ENCODE measurements at regions of chr14 and their contacts with region 1.

Region 1: GRCh38 chr14:24146978-24147760 is at the start of gene RNF31:
- DNase-seq: peak; percentile 97
- H3K4me3 Mint-ChIP-seq: peak within 1 kb of the TSS; percentile 94
- H3K27ac Mint-ChIP-seq: peak within 1 kb of the TSS; percentile 98
- H3K4me1 Mint-ChIP-seq: peaks cover 62% of the 10 kb centered on the region
- H3K27me3 Mint-ChIP-seq: no peaks in the 10 kb centered on the region
- total RNA-seq, gene RNF31: 115 and 129 TPM in 2 replicates

Region 2: GRCh38 chr14:24051789-24052655 is 95.1 kb before region 1 on chr14 and contains the start of gene CARMIL3:
- intact Hi-C with region 1: loop called (anchors 2 kb)
- DNase-seq: peak; percentile 67
- H3K4me3 Mint-ChIP-seq: peak within 1 kb of the TSS; percentile 85
- H3K27ac Mint-ChIP-seq: peak within 1 kb of the TSS; percentile 76
- H3K4me1 Mint-ChIP-seq: peaks cover 22% of the 10 kb centered on the region
- H3K27me3 Mint-ChIP-seq: peaks cover 17% of the 10 kb centered on the region
- total RNA-seq, gene CARMIL3: 3.0 and 3.4 TPM in 2 replicates

Region 3: DNA sequence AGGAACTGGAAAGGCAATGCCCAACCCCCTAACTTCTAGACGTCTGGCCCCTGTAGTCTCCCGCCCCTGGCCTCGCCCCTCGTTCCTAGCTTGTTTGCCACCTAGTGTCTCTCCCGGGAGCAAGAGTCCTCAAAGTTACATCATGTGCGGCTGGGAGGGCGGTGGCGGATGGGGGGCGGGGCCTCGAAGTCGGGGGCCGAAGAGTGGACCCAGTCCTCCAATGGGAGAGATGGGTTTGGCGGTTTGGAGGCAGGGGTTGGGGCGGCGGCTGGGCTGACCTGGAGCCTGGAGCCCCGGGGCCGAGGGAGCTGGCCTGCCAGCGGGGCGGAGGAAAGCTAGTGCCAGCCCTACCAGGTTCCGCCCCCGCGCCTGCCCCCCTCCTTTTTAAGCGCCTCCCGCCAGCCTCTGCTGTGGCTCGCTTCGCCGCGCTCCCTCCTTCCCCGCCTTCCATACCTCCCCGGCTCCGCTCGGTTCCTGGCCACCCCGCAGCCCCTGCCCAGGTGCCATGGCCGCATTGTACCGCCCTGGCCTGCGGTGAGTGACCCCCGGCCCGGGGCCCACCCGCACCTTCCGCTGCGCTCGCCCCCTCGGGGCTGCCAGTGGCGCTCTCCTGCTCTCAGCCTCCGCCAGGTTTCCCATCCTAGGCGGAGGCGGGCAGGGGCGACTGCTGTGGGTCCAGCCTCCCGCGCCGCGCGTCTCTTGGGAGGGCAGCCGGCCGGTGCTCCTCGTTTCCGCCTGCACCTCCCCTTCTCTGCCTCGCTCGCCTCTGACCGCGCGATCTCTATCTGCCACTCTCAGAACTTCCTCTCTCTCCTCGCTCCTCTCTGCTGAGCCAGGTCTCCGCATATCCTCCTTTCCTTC is 53.0 kb before region 1 on chr14 and contains the start of gene PCK2:
- intact Hi-C with region 1: loop called (anchors 1 kb)
- DNase-seq: peak; percentile 70
- H3K4me3 Mint-ChIP-seq: peak within 1 kb of the TSS; percentile 100
- H3K27ac Mint-ChIP-seq: peak within 1 kb of the TSS; percentile 97
- H3K4me1 Mint-ChIP-seq: peaks cover 36% of the 10 kb centered on the region
- H3K27me3 Mint-ChIP-seq: no peaks in the 10 kb centered on the region
- total RNA-seq, gene PCK2: 55.0 and 62.8 TPM in 2 replicates

Region 4: GRCh38 chr14:24108336-24108874 is 38.8 kb before region 1 on chr14:
- intact Hi-C with region 1: no loop called
- DNase-seq: no peak
- H3K4me3 Mint-ChIP-seq: peak overlapping the region; percentile 24
- H3K27ac Mint-ChIP-seq: peak overlapping the region; percentile 95
- H3K4me1 Mint-ChIP-seq: peaks cover 34% of the 10 kb centered on the region
- H3K27me3 Mint-ChIP-seq: no peaks in the 10 kb centered on the region

Region 5: DNA sequence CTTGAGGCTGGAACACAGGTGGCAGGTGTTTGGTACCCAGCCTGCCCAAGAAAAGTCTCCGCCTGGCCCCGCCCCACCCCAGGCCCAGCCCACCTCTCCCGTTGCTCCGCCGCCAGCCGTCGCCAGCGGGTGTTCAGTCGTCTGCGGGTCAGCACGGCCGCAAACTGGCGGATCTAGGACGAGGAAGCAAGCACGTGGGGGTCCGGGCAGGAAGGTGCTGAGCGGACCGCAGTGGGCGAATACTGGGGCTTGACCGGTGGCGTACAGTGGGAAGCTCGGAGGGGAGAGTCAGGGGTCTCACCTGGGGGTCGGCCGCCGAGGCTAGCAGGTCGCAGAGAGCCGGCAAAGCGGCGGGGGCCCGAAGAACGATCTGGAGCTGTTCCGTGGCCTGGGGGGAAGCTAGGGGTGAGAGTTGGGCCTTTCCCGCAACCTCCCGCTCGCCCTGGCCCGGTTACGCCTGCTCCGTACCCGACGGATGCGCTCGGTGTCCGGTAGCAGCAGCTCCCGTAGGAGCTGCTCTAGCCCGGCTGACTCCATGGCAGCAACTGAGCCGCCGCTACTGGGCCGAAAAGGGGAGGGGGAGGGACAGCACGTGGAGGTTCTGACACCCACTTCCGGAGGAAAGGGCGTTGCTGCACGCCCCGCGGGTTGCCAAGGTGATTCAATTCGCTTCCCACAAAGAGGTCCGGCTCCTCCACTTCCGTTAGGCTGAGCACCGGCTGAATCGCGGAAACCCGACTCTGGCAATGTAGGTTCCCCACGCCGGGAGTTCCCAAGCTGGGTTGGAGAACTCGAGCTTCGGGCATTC is 41.3 kb after region 1 on chr14 and contains the start of gene IPO4:
- intact Hi-C with region 1: loop called (anchors 1 kb)
- DNase-seq: peak; percentile 93
- H3K4me3 Mint-ChIP-seq: peak within 1 kb of the TSS; percentile 91
- H3K27ac Mint-ChIP-seq: peak within 1 kb of the TSS; percentile 86
- H3K4me1 Mint-ChIP-seq: peaks cover 42% of the 10 kb centered on the region
- H3K27me3 Mint-ChIP-seq: no peaks in the 10 kb centered on the region
- total RNA-seq, gene IPO4: 106 and 107 TPM in 2 replicates

Region 6: DNA sequence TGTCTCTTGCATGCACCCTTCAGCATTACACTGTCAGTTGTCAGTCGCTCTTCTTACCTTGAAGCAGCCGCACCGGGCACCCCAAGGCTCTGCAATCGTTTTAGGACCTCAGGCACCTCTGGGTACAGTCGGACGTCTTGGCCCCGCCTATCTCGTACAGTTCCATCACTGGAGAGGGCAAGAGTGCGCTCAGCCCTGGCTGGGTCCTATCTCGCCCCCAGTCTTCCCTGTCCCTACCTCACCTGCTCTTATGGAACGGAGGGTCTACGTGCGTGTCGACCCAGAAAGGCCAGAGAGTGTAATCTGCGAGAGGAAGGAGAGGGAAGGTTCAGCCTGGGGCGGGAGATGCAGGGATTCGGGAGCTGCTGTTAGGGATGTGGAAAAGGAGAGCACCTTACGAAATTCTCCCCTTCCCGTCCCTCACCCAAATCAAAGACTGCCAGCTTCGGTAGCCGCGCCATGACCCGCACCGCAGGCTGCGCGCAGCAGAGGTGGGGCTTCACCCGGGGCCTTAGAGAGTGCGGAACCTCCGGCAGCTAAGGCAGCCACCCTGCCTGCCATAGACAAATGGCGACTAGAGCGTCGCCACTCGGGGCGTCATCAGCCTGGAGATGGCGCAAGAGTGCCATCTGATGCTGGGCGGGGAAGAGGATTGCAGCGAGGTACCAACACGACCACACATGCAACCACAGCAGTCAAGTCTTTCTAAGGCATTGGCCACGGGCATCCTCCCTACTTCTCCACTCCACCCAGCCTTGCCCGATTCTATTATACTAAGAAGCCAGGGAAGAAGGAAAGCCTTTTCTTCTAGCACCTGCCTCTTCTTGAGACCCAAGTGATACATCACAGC is 68.6 kb after region 1 on chr14 and contains the start of gene MDP1:
- intact Hi-C with region 1: loop called (anchors 1 kb)
- DNase-seq: peak; percentile 85
- H3K4me3 Mint-ChIP-seq: peak within 1 kb of the TSS; percentile 90
- H3K27ac Mint-ChIP-seq: peak within 1 kb of the TSS; percentile 96
- H3K4me1 Mint-ChIP-seq: peaks cover 43% of the 10 kb centered on the region
- H3K27me3 Mint-ChIP-seq: no peaks in the 10 kb centered on the region
- total RNA-seq, gene MDP1: 11.6 and 12.9 TPM in 2 replicates

Region 7: GRCh38 chr14:24241829-24242443 is 94.8 kb after region 1 on chr14:
- intact Hi-C with region 1: loop called (anchors 1 kb)
- DNase-seq: peak; percentile 93
- H3K4me3 Mint-ChIP-seq: peak overlapping the region; percentile 96
- H3K27ac Mint-ChIP-seq: peak overlapping the region; percentile 99
- H3K4me1 Mint-ChIP-seq: peaks cover 58% of the 10 kb centered on the region
- H3K27me3 Mint-ChIP-seq: no peaks in the 10 kb centered on the region

Region 8: DNA sequence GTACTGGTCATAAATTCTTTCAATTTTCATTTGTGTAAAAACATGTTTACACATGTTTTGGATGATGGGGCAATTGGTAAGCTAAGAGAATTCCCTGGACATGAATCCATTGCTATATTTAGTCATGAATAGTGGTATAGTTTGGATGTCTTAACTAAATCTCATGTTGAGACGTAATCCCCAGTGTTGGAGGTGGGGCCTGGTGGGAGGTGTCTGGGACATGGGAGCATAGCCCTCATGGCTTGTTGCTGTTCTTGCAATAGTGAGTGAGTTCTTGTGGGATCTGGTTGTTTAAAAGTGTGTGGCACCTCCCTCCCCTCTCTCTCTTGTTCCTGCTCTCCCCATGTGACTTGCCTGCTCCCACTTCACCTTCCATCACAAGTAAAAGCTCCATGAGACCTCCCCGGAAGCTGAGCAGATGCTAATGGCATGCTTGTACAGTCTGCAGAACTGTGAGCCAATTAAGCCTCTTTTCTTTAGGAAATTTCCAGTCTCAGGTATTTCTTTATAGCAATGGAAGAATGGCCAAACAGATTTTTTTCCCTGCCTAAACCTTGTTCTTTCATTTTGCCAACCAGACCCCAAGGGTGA is 395.3 kb after region 1 on chr14:
- intact Hi-C with region 1: no loop called
- DNase-seq: no peak
- H3K4me3 Mint-ChIP-seq: no peak overlapping the region
- H3K27ac Mint-ChIP-seq: no peak overlapping the region
- H3K4me1 Mint-ChIP-seq: no peaks in the 10 kb centered on the region
- H3K27me3 Mint-ChIP-seq: peaks cover 6% of the 10 kb centered on the region